MCF 10A (cell line): ENCODE measurements at regions of chr1 and their contacts with region 1.

Region 1: DNA sequence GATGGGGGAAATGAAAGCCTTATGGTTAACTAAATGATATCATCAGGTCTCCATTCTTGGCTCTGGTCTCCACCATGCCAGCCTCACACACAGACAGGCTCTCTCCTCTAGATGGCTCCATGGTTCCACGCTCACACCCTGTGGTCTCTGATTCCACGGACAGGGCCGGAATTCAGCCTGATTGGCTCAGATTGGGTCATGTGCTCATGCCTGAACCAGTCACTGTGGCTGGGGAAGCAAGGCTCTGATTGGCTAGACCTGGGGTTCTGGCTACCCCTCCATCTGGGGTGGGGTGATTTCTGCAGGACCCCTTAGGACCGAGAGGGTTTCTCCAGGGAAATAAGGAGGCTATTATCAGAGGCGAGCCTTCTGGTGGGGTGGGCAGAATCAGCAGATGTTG is 277.0 kb downstream of the PTPRU start:
- DNase-seq: peak; percentile 78
- H3K4me3 Mint-ChIP-seq: no peak overlapping the region
- H3K27ac Mint-ChIP-seq: no peak overlapping the region
- H3K4me1 Mint-ChIP-seq: no peaks in the 10 kb centered on the region
- H3K27me3 Mint-ChIP-seq: peaks cover 57% of the 10 kb centered on the region
- CTCF ChIP-seq: peak; percentile 86

Region 2: DNA sequence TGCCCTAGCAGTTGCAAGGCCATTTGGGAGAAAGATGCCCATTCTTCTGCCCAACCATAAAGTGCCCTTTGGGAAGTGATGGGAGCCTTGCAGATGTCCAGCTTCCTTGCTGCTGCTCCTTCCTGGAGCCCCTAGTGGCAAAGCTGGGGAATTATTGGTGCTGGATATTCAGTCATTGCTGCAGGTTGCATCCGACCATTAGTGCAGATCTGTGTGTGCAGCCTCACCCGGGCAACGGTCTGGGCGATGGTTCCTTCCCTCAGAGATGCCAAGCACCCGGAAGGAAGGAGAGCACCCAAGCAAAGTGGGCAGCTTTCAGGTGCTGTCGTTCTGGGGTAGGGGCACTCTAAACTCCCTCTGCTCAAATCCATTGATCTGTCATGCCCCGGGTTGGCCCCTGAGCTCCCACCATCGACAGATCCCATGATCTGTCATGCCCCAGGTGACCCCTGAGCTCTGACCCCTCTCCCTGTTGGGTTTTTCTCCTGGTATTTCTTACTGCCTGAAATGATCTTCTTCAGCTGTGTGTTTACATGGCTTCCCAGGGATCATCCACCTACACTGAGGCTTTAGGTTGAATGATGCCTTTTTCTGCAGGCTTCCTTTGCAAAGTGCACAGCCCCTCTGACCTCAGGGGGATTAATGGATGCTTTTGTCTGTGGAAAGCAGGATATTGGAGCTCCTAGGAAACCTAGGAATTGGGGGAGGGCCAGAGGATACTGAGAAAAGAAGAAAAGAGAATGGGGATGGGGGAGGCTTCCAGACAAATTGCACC is 190.4 kb after region 1 on chr1:
- CTCF ChIA-PET with region 1: interaction called, 4 read pairs
- POLR2A ChIA-PET with region 1: no interaction called
- intact Hi-C with region 1: loop called (anchors 1 kb)
- DNase-seq: peak; percentile 59
- H3K4me3 Mint-ChIP-seq: no peak overlapping the region
- H3K27ac Mint-ChIP-seq: no peak overlapping the region
- H3K4me1 Mint-ChIP-seq: peaks cover 11% of the 10 kb centered on the region
- H3K27me3 Mint-ChIP-seq: peaks cover 14% of the 10 kb centered on the region
- CTCF ChIP-seq: peak; percentile 79

Region 3: DNA sequence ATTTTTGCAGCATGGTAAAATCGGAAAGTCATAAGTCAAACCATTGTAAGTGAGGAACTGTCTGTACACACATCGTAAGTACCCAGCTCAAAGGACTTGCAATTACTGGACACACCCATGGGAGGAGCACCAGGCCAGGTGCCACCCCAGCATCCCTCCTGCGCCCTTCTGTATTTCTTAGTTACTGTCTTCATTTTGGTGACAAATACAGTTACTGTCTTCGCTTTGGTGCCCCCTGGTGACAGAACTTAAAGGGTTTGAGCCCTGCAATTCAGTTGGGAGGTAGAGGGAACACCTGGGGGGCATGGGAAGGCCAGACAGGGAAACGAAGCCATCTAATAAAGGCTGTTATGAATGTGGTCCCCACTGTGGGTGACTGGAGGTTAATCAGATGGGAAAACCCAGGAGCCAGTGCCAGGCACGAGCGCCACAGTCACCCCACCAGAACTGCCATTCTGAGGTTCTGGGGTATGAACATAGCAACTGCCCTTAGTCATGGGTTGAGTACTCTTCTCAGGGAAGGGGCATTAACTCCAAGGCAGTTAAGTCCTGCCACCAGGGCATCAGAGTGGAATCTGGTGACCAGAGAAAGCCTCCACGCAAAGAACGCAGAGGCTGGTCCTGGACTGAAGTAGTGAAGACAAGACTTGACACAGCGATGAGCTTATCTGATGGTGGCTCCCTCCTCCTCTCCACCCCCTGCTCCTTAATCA is 335.8 kb after region 1 on chr1:
- CTCF ChIA-PET with region 1: interaction called, 3 read pairs
- POLR2A ChIA-PET with region 1: no interaction called
- intact Hi-C with region 1: loop called (anchors 1 kb)
- DNase-seq: peak; percentile 62
- H3K4me3 Mint-ChIP-seq: no peak overlapping the region
- H3K27ac Mint-ChIP-seq: no peak overlapping the region
- H3K4me1 Mint-ChIP-seq: no peaks in the 10 kb centered on the region
- H3K27me3 Mint-ChIP-seq: peaks cover 67% of the 10 kb centered on the region
- CTCF ChIP-seq: peak; percentile 51

Region 4: DNA sequence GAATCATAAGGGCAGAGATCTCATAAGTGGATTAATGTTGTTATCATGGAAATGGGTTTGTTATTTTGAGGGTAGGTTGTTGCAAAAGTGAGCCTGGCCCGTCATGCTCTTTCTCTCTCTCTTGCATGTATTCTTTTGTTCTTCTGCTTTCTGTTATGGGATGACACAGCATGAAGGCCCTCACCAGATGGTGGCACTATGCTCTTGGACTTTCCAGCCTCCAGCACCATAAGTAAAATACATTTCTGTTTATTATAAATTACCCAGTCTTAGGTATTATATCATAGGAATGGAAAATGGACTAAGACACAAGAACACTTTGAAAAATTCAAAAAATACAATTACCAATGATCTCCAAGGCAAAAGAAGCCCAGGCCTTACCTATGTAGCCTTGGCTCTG is 399.1 kb after region 1 on chr1:
- CTCF ChIA-PET with region 1: no interaction called
- POLR2A ChIA-PET with region 1: no interaction called
- intact Hi-C with region 1: loop called (anchors 1 kb)
- DNase-seq: peak; percentile 53
- H3K4me3 Mint-ChIP-seq: no peak overlapping the region
- H3K27ac Mint-ChIP-seq: no peak overlapping the region
- H3K4me1 Mint-ChIP-seq: no peaks in the 10 kb centered on the region
- H3K27me3 Mint-ChIP-seq: peaks cover 38% of the 10 kb centered on the region
- CTCF ChIP-seq: peak; percentile 36

Region 5: DNA sequence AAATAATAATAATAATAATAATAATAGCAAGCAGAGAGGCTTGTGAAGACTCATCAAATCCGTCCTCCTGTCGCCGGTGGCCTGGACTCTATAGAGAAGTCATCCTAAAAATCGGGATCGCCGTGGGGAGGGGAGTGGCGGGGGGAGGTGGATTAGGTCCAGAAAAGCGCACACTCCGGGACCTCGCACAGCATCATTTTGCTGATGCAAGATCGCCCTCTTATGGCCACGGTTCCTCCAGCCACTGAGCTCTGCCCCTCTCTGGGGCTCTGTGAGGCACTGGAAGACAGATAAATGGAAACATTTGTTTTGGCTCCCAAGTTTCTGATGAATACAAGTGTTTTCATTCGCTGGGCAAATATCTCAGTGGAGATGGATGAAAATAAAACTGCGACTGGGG is 598.1 kb after region 1 on chr1:
- CTCF ChIA-PET with region 1: interaction called, 3 read pairs
- POLR2A ChIA-PET with region 1: no interaction called
- intact Hi-C with region 1: loop called (anchors 1 kb)
- DNase-seq: peak; percentile 57
- H3K4me3 Mint-ChIP-seq: no peak overlapping the region
- H3K27ac Mint-ChIP-seq: no peak overlapping the region
- H3K4me1 Mint-ChIP-seq: peaks cover 6% of the 10 kb centered on the region
- H3K27me3 Mint-ChIP-seq: peaks cover 72% of the 10 kb centered on the region
- CTCF ChIP-seq: peak; percentile 67

Region 6: DNA sequence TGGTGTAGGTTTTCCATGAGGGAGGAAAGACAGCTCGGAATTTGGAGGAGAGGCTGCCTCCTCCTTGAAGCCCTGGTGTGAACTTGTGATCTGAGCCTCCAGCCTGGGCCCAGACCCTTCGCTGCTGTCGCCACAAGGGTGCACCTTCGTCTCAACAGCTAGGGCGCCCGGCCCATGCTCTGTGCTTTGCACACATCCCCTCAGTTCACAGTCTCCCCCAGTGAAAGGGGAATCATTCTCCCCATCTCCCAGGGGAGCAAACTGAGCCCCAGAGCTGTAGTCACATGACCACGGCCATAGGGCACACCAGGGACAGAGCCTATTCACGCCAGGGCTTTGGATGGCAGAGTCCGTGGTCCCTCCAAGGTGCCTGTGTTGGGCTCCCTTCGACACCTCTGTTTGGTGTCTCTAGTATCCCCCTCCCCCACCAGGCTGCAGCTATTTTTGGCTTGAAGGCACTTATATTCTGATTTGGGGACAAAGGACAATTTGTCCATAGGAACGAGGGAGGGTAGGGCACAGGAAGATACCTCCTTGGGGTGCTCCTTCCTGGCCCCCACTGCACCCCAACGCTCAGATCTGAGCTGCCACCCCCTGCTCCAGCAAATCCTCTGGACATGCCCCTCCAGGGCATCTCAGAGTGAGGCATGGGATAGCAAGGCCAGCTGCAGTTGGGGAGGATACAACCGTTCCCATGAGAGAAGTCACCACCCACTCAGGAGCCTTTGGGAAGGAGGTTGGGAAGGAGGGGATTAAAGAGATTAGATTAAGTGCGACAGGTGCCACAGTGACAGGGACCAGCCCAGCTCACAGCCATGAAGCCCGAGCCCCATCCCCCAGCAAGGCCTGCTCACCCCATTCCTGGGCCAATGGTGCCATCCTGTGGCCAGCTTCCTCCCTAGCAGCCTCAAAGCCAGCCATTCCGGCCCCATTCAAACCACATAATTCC is 1194.3 kb after region 1 on chr1:
- CTCF ChIA-PET with region 1: no interaction called
- POLR2A ChIA-PET with region 1: no interaction called
- intact Hi-C with region 1: loop called (anchors 1 kb)
- DNase-seq: peak; percentile 75
- H3K4me3 Mint-ChIP-seq: no peak overlapping the region
- H3K27ac Mint-ChIP-seq: no peak overlapping the region
- H3K4me1 Mint-ChIP-seq: peaks cover 5% of the 10 kb centered on the region
- H3K27me3 Mint-ChIP-seq: peaks cover 11% of the 10 kb centered on the region
- CTCF ChIP-seq: peak; percentile 97